AG04450 (cell line): ENCODE measurements at regions of chr1 and their contacts with region 1.

Region 1: DNA sequence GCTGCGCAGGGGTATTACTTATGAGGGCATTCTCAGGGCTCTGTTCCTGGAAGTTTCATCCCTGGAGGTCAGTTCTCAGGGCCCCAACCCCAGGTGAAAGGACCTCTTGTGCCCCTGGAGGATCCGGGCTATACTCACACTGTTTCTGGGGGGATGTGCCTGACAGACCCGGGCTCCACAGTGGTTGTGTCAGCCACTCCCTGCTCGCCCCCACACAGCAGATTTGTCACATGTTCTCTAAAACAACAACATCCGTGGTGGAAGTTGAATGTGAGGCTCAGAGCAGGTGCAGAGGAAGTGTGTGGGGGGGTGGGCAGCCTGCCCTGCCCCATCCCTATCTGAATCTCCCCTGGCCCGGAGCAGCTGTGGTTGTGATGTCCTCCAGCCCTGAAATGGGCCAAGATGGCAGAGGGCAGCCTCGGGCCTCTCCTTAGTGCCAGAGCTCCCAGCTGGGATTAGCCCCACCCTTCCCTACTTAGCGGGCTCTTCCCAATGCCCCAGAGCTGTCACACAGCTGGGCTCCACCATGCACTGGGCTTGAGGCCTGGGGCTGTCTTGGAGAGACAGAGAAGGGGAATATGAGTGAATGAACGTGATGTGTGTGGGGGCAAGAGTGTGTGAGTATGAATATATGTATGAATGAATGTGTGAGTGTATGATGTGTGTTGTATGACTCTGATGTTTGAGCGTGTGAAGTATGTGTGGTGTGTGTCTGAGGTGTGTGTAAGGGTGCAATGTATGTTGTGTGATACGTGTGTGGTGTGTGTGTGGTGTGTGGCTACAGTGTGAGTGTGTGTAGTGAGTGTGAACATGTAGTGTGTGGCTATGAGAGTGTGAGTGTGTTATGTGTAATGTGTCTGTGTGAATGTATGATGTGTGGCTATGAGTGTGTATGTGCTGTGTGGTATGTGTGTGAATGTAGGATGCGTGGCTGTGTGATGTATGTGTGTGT is 1.5 kb upstream of the FCMR start:
- DNase-seq: no peak
- H3K4me3 ChIP-seq: no peak overlapping the region
- H3K27ac ChIP-seq: no peak overlapping the region
- H3K27me3 ChIP-seq: no peaks in the 10 kb centered on the region
- CTCF ChIP-seq: no peak

Region 2: DNA sequence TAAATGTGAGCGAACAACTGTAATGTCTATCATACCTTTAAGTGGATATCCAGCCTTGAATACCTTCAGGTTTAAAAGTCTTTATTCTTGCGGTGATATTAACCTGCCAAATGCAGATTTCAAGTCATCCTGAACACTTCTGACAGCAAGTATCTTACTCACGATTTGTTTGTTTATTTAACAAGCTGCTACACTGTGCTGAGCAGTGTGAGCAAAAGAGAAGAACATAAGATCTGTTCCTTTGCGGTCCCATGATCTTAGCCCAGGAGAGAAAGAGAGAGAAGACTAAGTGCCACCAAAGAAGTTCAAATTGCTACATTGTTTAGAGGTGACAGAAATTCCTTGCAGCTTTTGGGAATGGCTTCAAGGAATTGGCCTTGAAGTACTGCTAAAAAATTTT is 35.6 kb before region 1 on chr1:
- CTCF ChIA-PET with region 1: no interaction called
- POLR2A ChIA-PET with region 1: no interaction called
- DNase-seq: no peak
- H3K4me3 ChIP-seq: no peak overlapping the region
- H3K27ac ChIP-seq: no peak overlapping the region
- H3K27me3 ChIP-seq: no peaks in the 10 kb centered on the region
- CTCF ChIP-seq: no peak

Region 3: GRCh38 chr1:206935491-206936067 is 12.3 kb after region 1 on chr1:
- CTCF ChIA-PET with region 1: interaction called, 5 read pairs
- POLR2A ChIA-PET with region 1: interaction called, 14 read pairs
- DNase-seq: peak; percentile 2
- H3K4me3 ChIP-seq: no peak overlapping the region
- H3K27ac ChIP-seq: no peak overlapping the region
- H3K27me3 ChIP-seq: peaks cover 22% of the 10 kb centered on the region
- CTCF ChIP-seq: peak; percentile 58